ENCODE measurements at regions of chr10 and their contacts with region 1.

Region 1: DNA sequence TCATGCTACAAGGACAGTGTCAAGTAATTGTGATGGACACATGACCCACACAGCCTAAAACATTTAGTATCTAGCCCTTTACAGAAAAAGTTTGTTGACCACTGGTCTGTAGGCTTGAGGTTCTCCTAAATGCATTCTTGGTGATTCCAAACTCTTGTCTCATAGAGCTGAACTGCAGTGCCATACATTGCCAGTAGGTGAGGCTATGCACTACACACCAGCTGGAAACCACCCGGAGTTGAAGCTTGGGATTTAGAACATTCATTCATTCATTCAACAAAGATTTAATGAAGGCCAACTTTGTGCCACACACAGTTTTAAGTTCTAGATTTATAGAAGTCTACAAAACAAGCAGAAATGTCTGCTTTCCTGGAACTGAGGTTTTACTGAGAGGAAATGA is 77.3 kb upstream of the TCF7L2 start:
- DNase-seq: peak; percentile 9
- H3K4me3 ChIP-seq: no peak overlapping the region
- H3K27ac ChIP-seq: no peak overlapping the region
- H3K4me1 ChIP-seq: no peaks in the 10 kb centered on the region
- H3K27me3 ChIP-seq: no peaks in the 10 kb centered on the region
- CTCF ChIP-seq: peak; percentile 47; the same call in 1 of the 2 replicates

Region 2: GRCh38 chr10:112649006-112649821 is 223.5 kb before region 1 on chr10:
- CTCF ChIA-PET with region 1: no interaction called
- POLR2A ChIA-PET with region 1: no interaction called
- intact Hi-C with region 1: no loop called
- DNase-seq: no peak
- H3K4me3 ChIP-seq: no peak overlapping the region
- H3K27ac ChIP-seq: no peak overlapping the region
- H3K4me1 ChIP-seq: no peaks in the 10 kb centered on the region
- H3K27me3 ChIP-seq: no peaks in the 10 kb centered on the region
- CTCF ChIP-seq: no peak

Region 3: GRCh38 chr10:113704637-113705343 is 832.1 kb after region 1 on chr10:
- CTCF ChIA-PET with region 1: no interaction called
- POLR2A ChIA-PET with region 1: interaction called, 12 read pairs
- intact Hi-C with region 1: no loop called
- DNase-seq: peak; percentile 80
- H3K4me3 ChIP-seq: no peak overlapping the region
- H3K27ac ChIP-seq: peak overlapping the region; percentile 72
- H3K4me1 ChIP-seq: peaks cover 53% of the 10 kb centered on the region
- H3K27me3 ChIP-seq: no peaks in the 10 kb centered on the region
- CTCF ChIP-seq: peak; percentile 83